CD14-positive monocyte (primary cell): ENCODE measurements at regions of chr3 and their contacts with region 1.

Region 1: GRCh38 chr3:125916376-125916978 is 52.5 kb upstream of the ROPN1B start:
- DNase-seq: peak; percentile 83 to 95 (median 93)
- H3K4me3 ChIP-seq: peak overlapping the region; percentile 50 to 85 (median 57)
- H3K4me3 Mint-ChIP-seq: peak overlapping the region; percentile 83 to 91
- H3K27ac ChIP-seq: peak overlapping the region; percentile 69 to 70
- H3K27ac Mint-ChIP-seq: peak overlapping the region; percentile 89 to 96 (median 95)
- H3K4me1 ChIP-seq: peaks cover 11 to 14% of the 10 kb centered on the region in 2 donors
- H3K4me1 Mint-ChIP-seq: peaks cover 11% of the 10 kb centered on the region
- H3K27me3 ChIP-seq: no peaks in the 10 kb centered on the region
- H3K27me3 Mint-ChIP-seq: peaks cover 0 to 3% (median 0%) of the 10 kb centered on the region in 3 donors
- CTCF ChIP-seq: peak; percentile 14

Region 2: GRCh38 chr3:125594581-125595011 is 321.9 kb before region 1 on chr3:
- intact Hi-C with region 1: loop called in 1 of 2 experiments (anchors 5 kb)
- DNase-seq: peak in 1 of 3 donors; percentile 4
- H3K4me3 ChIP-seq: peak overlapping the region; percentile 79 to 100 (median 99)
- H3K4me3 Mint-ChIP-seq: peak overlapping the region; percentile 96 to 99
- H3K27ac ChIP-seq: peak overlapping the region; percentile 91 to 94
- H3K27ac Mint-ChIP-seq: peak overlapping the region; percentile 94 to 99 (median 97)
- H3K4me1 ChIP-seq: peaks cover 39 to 51% of the 10 kb centered on the region in 2 donors
- H3K4me1 Mint-ChIP-seq: peaks cover 34% of the 10 kb centered on the region
- H3K27me3 ChIP-seq: no peaks in the 10 kb centered on the region
- H3K27me3 Mint-ChIP-seq: peaks cover 0 to 3% (median 1%) of the 10 kb centered on the region in 3 donors
- CTCF ChIP-seq: no peak

Region 3: GRCh38 chr3:125602752-125603649 is 313.5 kb before region 1 on chr3:
- intact Hi-C with region 1: loop called in 1 of 2 experiments (anchors 10 kb)
- DNase-seq: no peak
- H3K4me3 ChIP-seq: no peak overlapping the region
- H3K4me3 Mint-ChIP-seq: no peak overlapping the region
- H3K27ac ChIP-seq: no peak overlapping the region
- H3K27ac Mint-ChIP-seq: no peak overlapping the region
- H3K4me1 ChIP-seq: no peaks in the 10 kb centered on the region
- H3K4me1 Mint-ChIP-seq: peaks cover 3% of the 10 kb centered on the region
- H3K27me3 ChIP-seq: no peaks in the 10 kb centered on the region
- H3K27me3 Mint-ChIP-seq: peaks cover 0 to 11% (median 0%) of the 10 kb centered on the region in 3 donors
- CTCF ChIP-seq: no peak

Region 4: DNA sequence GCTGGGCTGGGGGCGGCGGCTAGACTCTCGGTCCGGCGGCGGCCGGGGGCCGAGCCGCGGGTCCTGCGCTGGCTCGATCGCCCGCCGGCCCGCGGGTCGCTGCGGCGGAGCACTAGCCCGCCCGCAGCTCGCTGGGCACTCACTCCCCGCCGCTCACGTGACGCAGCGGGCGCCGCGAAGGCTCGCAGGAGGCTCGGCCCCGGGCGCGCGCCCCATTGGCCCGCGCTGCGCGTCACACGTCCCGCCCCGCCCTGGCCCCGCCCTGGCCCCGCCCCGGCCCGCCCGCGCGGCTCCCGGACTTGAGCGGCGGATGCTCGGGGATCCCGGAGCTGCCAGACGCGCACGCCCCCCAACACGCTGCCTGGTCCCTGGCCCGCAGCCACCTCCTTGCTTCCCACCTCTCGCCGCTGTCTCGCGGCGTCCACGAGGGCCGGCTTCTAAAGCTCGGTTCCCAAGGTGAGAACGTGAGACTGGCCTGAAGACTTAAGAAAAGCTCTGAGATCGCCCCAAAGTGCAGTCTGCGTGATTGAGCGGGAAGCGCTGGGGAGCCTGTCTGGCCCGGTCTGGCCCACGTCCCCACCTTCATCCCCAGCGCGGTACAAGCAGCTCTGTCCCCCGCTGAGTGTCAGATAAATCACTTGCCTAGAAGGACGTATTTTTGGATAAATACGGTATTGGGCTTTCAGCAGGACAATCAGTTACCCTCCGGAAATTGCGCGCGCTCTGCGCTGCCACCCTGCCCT is 441.0 kb after region 1 on chr3 and contains the start of gene KLF15:
- intact Hi-C with region 1: loop called in 1 of 2 experiments (anchors 5 kb)
- DNase-seq: peak; percentile 76 to 85 (median 77)
- H3K4me3 ChIP-seq: peak within 1 kb of the TSS; percentile 34 to 73 (median 37)
- H3K4me3 Mint-ChIP-seq: peak within 1 kb of the TSS; percentile 82 to 94
- H3K27ac ChIP-seq: no peak within 1 kb of the TSS
- H3K27ac Mint-ChIP-seq: peak within 1 kb of the TSS in 4 of 7 donors; percentile 58 to 70 (median 66)
- H3K4me1 ChIP-seq: peaks cover 18 to 24% of the 10 kb centered on the region in 2 donors
- H3K4me1 Mint-ChIP-seq: peaks cover 18% of the 10 kb centered on the region
- H3K27me3 ChIP-seq: peaks cover 32 to 75% of the 10 kb centered on the region in 2 donors
- H3K27me3 Mint-ChIP-seq: peaks cover 59 to 78% (median 64%) of the 10 kb centered on the region in 3 donors
- CTCF ChIP-seq: no peak
- polyA plus RNA-seq, gene KLF15: not detected

Region 5: DNA sequence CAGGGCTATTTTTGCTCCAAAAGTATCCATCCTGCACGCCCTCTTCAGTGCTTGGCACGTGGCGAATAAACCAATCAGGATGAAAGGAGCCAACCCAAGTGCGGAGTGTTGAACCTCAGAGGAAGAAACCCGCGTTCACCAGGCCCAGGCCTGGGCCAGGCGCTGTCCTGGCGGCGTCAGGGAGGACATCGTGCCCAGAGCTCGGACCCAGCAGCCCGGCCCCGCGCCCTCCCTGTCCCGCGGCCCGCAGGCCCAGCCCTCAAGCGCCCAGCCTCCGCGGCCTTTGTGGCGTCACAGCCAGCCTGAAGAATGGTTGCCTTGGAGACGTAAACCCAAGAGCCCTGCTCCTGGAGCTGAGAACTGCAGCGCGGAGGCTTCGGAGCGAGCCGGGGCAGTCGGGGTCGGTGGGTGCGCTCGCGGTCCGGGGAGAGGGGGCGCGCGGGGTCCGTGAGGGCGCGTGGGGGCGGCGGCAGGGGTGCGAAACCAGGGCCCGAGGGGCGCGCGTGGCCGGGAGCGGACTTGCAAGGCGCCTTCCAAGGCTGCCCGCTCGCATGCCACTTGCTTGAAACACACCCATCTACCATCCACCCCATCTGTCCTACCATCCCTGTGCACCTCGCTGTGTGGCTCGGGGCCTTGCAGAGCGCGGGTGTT is 478.2 kb after region 1 on chr3 and contains the start of gene CFAP100:
- intact Hi-C with region 1: loop called in 1 of 2 experiments (anchors 10 kb)
- DNase-seq: no peak
- H3K4me3 ChIP-seq: no peak within 1 kb of the TSS
- H3K4me3 Mint-ChIP-seq: peak within 1 kb of the TSS in 1 of 2 donors; percentile 68
- H3K27ac ChIP-seq: no peak within 1 kb of the TSS
- H3K27ac Mint-ChIP-seq: no peak within 1 kb of the TSS
- H3K4me1 ChIP-seq: peaks cover 4% of the 10 kb centered on the region in 2 donors
- H3K4me1 Mint-ChIP-seq: peaks cover 5% of the 10 kb centered on the region
- H3K27me3 ChIP-seq: peaks cover 16 to 49% of the 10 kb centered on the region in 2 donors
- H3K27me3 Mint-ChIP-seq: peaks cover 51 to 61% (median 56%) of the 10 kb centered on the region in 3 donors
- CTCF ChIP-seq: no peak
- polyA plus RNA-seq, gene CFAP100: not detected

Region 6: GRCh38 chr3:126431103-126431534 is 514.6 kb after region 1 on chr3:
- intact Hi-C with region 1: no loop called
- DNase-seq: no peak
- H3K4me3 ChIP-seq: no peak overlapping the region
- H3K4me3 Mint-ChIP-seq: no peak overlapping the region
- H3K27ac ChIP-seq: no peak overlapping the region
- H3K27ac Mint-ChIP-seq: no peak overlapping the region
- H3K4me1 ChIP-seq: no peaks in the 10 kb centered on the region
- H3K4me1 Mint-ChIP-seq: no peaks in the 10 kb centered on the region
- H3K27me3 ChIP-seq: no peaks in the 10 kb centered on the region
- H3K27me3 Mint-ChIP-seq: peaks cover 0 to 2% (median 2%) of the 10 kb centered on the region in 3 donors
- CTCF ChIP-seq: no peak

Region 7: GRCh38 chr3:126475413-126476114 is 559.1 kb after region 1 on chr3 and contains the start of gene ZXDC:
- intact Hi-C with region 1: loop called (anchors 10 kb)
- DNase-seq: peak; percentile 92 to 94 (median 92)
- H3K4me3 ChIP-seq: peak within 1 kb of the TSS; percentile 57 to 84 (median 63)
- H3K4me3 Mint-ChIP-seq: peak within 1 kb of the TSS; percentile 88 to 92
- H3K27ac ChIP-seq: peak within 1 kb of the TSS; percentile 89 to 95
- H3K27ac Mint-ChIP-seq: peak within 1 kb of the TSS; percentile 87 to 98 (median 95)
- H3K4me1 ChIP-seq: peaks cover 41 to 47% of the 10 kb centered on the region in 2 donors
- H3K4me1 Mint-ChIP-seq: peaks cover 37% of the 10 kb centered on the region
- H3K27me3 ChIP-seq: no peaks in the 10 kb centered on the region
- H3K27me3 Mint-ChIP-seq: no peaks in the 10 kb centered on the region
- CTCF ChIP-seq: no peak
- polyA plus RNA-seq, gene ZXDC: 6.3 to 44.8 (median 9.7) TPM